CD4-positive, alpha-beta T cell (primary cell): ENCODE measurements at regions of chr12 and their contacts with region 1.

Region 1: GRCh38 chr12:6953442-6954315 is 2.5 kb downstream of the PTPN6 start:
- DNase-seq: peak in 13 of 14 experiments; percentile 50 to 90 (median 69)
- ATAC-seq: peak; percentile 45
- H3K4me3 ChIP-seq: peak overlapping the region; percentile 98
- H3K4me3 Mint-ChIP-seq: peak overlapping the region; percentile 100
- H3K27ac ChIP-seq: peak overlapping the region; percentile 80 to 96
- H3K27ac Mint-ChIP-seq: peak overlapping the region; percentile 97
- H3K4me1 ChIP-seq: peaks cover 94% of the 10 kb centered on the region
- H3K4me1 Mint-ChIP-seq: peaks cover 89% of the 10 kb centered on the region
- H3K27me3 ChIP-seq: no peaks in the 10 kb centered on the region
- H3K27me3 Mint-ChIP-seq: no peaks in the 10 kb centered on the region
- CTCF ChIP-seq: no peak

Region 2: DNA sequence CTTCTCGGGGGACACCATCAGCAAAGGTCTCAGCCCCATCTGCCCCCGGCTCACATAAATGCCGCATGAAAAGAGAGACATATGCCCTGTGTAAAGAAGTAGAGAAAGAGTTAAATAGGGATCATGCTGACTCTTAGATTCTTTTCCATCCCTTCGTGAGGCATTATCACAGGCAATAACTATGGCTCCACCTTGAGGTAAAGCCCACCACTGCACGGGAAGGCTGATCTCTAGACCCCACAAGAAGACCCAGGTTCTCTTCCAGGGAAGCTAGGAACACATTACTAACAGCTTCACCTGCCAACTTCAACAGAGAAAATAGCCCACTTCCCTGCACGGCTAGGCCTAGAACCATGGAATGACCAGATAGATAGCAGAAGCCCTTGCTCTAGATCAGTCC is 371.5 kb before region 1 on chr12:
- CTCF ChIA-PET with region 1: no interaction called
- POLR2A ChIA-PET with region 1: no interaction called
- intact Hi-C with region 1: no loop called
- DNase-seq: no peak
- ATAC-seq: no peak
- H3K4me3 ChIP-seq: no peak overlapping the region
- H3K4me3 Mint-ChIP-seq: no peak overlapping the region
- H3K27ac ChIP-seq: no peak overlapping the region
- H3K27ac Mint-ChIP-seq: no peak overlapping the region
- H3K4me1 ChIP-seq: no peaks in the 10 kb centered on the region
- H3K4me1 Mint-ChIP-seq: no peaks in the 10 kb centered on the region
- H3K27me3 ChIP-seq: no peaks in the 10 kb centered on the region
- H3K27me3 Mint-ChIP-seq: no peaks in the 10 kb centered on the region
- CTCF ChIP-seq: no peak

Region 3: DNA sequence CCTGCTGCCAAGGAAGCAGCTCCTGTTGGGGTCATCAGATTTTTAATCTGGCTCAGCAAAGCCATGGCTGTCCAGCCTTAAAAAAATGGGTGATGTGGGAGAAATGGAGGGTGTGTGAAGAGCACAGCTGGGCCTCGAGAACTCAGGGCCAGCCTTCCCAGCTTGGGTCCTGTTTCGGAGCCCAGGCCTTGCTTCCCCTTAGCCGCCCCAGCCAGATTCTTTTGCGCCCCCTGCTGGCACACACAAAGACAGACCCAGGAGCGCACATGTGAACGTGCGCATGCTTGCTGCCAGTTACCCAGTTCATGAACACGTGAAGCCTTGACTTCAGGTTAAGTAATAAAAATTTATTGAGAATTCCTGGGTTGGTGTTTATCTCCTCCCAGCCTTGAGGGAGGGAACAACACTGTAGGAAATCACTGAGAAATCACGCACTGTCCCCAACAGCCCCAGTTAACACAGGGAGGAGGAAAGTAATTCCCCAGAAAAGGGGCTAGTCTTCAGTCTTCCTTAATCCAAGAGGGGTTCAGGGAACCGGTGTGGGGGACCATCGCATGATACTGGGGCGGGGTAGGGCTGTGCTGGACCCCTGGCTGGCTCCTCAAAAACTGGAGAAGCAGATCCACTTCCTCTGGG is 11.5 kb after region 1 on chr12:
- CTCF ChIA-PET with region 1: interaction called, 324 read pairs
- POLR2A ChIA-PET with region 1: interaction called, 963 read pairs
- intact Hi-C with region 1: loop called in 1 of 2 experiments (anchors 1 kb)
- DNase-seq: peak; percentile 83 to 96 (median 86)
- ATAC-seq: peak; percentile 50
- H3K4me3 ChIP-seq: no peak overlapping the region
- H3K4me3 Mint-ChIP-seq: peak overlapping the region; percentile 79
- H3K27ac ChIP-seq: peak overlapping the region; percentile 38 to 39
- H3K27ac Mint-ChIP-seq: peak overlapping the region; percentile 90
- H3K4me1 ChIP-seq: peaks cover 70% of the 10 kb centered on the region
- H3K4me1 Mint-ChIP-seq: peaks cover 58% of the 10 kb centered on the region
- H3K27me3 ChIP-seq: no peaks in the 10 kb centered on the region
- H3K27me3 Mint-ChIP-seq: no peaks in the 10 kb centered on the region
- CTCF ChIP-seq: peak; percentile 94